ENCODE measurements at regions of chr19 and their contacts with region 1.

Region 1: GRCh38 chr19:984165-984967 is at the start of gene WDR18:
- DNase-seq: peak; percentile 88 to 92
- ATAC-seq: peak; percentile 76 to 85
- H3K4me3 ChIP-seq: peak within 1 kb of the TSS; percentile 96
- H3K27ac ChIP-seq: peak within 1 kb of the TSS; percentile 97 to 100
- H3K4me1 ChIP-seq: peaks cover 26% of the 10 kb centered on the region
- CTCF ChIP-seq: no peak
- EP300 ChIP-seq: no peak
- POLR2A ChIP-seq: peak; percentile 46
- RAD21 ChIP-seq: no peak
- polyA plus RNA-seq, gene WDR18: 22.2 and 23.8 TPM in 2 replicates

Region 2: DNA sequence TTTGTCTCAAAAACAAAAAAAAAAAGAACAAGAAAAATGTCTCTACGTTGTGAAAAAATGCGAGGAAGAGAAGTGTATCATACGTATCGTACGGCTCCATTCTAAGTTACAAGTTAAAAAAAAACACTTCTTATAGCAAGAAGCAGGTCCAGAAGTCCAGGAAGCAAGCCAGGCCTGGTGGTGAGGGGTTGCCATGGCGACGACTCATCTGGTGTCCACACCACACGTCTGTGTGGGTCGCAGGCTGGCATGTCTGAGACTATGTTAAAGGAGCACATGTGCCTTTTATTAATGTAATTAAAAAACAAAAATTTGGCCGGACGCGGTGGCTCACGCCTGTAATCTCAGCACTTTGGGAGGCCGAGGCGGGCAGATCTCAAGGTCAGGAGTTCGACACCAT is 97.3 kb before region 1 on chr19:
- CTCF ChIA-PET with region 1: no interaction called
- POLR2A ChIA-PET with region 1: no interaction called
- DNase-seq: no peak
- ATAC-seq: no peak
- H3K4me3 ChIP-seq: no peak overlapping the region
- H3K27ac ChIP-seq: no peak overlapping the region
- H3K4me1 ChIP-seq: no peaks in the 10 kb centered on the region
- CTCF ChIP-seq: no peak
- EP300 ChIP-seq: no peak
- POLR2A ChIP-seq: no peak
- RAD21 ChIP-seq: no peak

Region 3: GRCh38 chr19:925526-926322 is 58.6 kb before region 1 on chr19 and contains the start of gene ARID3A:
- CTCF ChIA-PET with region 1: interaction called, 93 read pairs
- POLR2A ChIA-PET with region 1: interaction called, 6 read pairs
- DNase-seq: peak; percentile 71 to 77
- ATAC-seq: peak; percentile 62 to 73
- H3K4me3 ChIP-seq: peak within 1 kb of the TSS; percentile 91
- H3K27ac ChIP-seq: peak within 1 kb of the TSS; percentile 99 to 100
- H3K4me1 ChIP-seq: peaks cover 21% of the 10 kb centered on the region; the same call in 2 of the 3 replicates
- CTCF ChIP-seq: no peak
- EP300 ChIP-seq: no peak
- POLR2A ChIP-seq: no peak
- RAD21 ChIP-seq: no peak
- polyA plus RNA-seq, gene ARID3A: 3.3 and 3.4 TPM in 2 replicates

Region 4: DNA sequence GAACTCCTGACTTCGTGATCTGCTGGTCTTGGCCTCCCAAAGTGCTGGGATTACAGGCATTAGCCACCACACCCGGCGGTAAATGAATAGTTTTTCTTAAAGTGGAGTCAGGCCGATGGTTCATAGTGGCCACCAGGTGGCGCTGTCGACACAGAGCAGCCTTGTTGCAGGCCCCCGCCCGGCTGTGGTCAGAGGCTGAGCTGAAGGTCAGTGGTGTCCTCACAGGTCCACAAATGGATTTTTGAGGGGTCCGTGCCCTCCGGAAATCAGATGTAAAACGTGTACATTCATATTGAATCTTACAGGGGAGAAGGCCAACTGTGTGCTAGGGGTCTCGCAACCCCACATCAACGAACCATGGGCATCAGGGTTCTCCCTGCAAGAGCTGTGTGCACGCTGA is 13.7 kb before region 1 on chr19:
- CTCF ChIA-PET with region 1: interaction called, 28 read pairs
- POLR2A ChIA-PET with region 1: interaction called, 7 read pairs
- DNase-seq: peak in 1 of 2 experiments; percentile 60
- ATAC-seq: no peak
- H3K4me3 ChIP-seq: no peak overlapping the region
- H3K27ac ChIP-seq: no peak overlapping the region
- H3K4me1 ChIP-seq: no peaks in the 10 kb centered on the region
- CTCF ChIP-seq: peak; percentile 19; the same call in 2 of the 3 replicates
- EP300 ChIP-seq: no peak
- POLR2A ChIP-seq: no peak
- RAD21 ChIP-seq: no peak

Region 5: DNA sequence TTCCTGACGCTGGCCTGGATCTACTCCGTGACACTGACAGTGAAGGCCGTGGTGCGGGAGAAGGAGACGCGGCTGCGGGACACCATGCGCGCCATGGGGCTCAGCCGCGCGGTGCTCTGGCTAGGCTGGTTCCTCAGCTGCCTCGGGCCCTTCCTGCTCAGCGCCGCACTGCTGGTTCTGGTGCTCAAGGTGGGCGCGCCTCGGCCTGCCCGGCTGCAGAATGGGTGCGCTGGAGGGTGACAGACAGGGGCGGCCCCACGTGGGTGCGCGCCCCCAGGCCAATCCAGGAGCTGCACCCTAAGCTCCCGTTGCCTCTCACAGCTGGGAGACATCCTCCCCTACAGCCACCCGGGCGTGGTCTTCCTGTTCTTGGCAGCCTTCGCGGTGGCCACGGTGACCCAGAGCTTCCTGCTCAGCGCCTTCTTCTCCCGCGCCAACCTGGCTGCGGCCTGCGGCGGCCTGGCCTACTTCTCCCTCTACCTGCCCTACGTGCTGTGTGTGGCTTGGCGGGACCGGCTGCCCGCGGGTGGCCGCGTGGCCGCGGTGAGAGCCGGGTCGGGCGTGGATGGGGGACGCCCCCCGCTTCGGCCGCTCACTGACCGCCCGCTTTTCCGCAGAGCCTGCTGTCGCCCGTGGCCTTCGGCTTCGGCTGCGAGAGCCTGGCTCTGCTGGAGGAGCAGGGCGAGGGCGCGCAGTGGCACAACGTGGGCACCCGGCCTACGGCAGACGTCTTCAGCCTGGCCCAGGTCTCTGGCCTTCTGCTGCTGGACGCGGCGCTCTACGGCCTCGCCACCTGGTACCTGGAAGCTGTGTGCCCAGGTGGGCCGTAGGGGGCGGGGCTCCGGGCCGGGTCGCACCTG is 62.7 kb after region 1 on chr19:
- CTCF ChIA-PET with region 1: no interaction called
- POLR2A ChIA-PET with region 1: no interaction called
- DNase-seq: no peak
- ATAC-seq: no peak
- H3K4me3 ChIP-seq: no peak overlapping the region
- H3K27ac ChIP-seq: no peak overlapping the region
- H3K4me1 ChIP-seq: peaks cover 13% of the 10 kb centered on the region
- CTCF ChIP-seq: no peak
- EP300 ChIP-seq: no peak
- POLR2A ChIP-seq: no peak
- RAD21 ChIP-seq: no peak

Measured in A549 (cell line).